ENCODE measurements at regions of chr13 and their contacts with region 1.

Region 1: GRCh38 chr13:33228648-33229445 is 56.7 kb downstream of the STARD13 start:
- DNase-seq: peak; percentile 26
- ATAC-seq: no peak
- H3K4me3 Mint-ChIP-seq: no peak overlapping the region
- H3K27ac Mint-ChIP-seq: no peak overlapping the region
- H3K4me1 Mint-ChIP-seq: peaks cover 2% of the 10 kb centered on the region
- H3K27me3 Mint-ChIP-seq: peaks cover 5% of the 10 kb centered on the region

Region 2: DNA sequence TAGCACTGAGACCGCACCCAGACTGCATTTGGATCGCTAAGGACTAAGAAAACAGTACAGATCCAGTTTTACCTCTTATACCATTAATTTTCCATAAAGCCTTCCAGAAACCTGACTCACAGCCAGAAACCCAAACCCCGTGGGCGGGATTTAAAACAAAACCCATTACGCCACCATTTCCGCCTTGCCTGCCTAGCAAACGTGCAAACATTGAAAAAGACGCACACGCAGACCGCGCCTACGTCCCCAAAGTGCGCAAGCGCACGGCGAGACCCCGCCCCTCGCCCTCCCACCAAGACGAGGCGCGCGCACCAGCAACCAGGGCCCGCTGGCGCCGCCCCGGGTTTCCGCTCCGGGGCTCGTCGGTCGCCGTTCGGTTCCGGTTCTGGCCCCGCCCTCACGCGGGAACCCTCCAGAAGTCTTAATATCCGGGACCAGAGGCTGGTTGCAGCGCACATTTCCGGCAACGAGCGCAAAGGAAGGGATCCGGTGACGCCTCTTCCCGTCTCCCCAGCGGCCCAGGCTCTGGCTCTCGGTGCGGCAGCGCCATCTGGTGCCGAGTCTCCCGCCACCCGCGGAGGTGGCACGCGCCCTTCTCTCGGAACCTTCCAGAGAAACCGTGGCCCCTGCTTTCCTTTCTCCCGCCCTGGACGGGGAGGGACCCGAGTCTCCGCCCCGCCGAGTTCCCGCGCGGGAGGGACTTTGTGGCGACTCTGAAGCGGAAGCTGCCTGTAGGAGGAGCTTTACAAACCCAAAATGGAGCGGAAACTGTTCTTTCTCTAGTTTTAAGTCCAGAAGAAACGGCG is 313.6 kb after region 1 on chr13:
- CTCF ChIA-PET with region 1: interaction called, 11 read pairs
- POLR2A ChIA-PET with region 1: no interaction called
- DNase-seq: peak; percentile 97
- ATAC-seq: peak; percentile 91
- H3K4me3 Mint-ChIP-seq: peak overlapping the region; percentile 88
- H3K27ac Mint-ChIP-seq: peak overlapping the region; percentile 100
- H3K4me1 Mint-ChIP-seq: peaks cover 30% of the 10 kb centered on the region
- H3K27me3 Mint-ChIP-seq: no peaks in the 10 kb centered on the region

Region 3: GRCh38 chr13:33723772-33724435 is 495.1 kb after region 1 on chr13:
- CTCF ChIA-PET with region 1: interaction called, 13 read pairs
- POLR2A ChIA-PET with region 1: no interaction called
- DNase-seq: peak; percentile 73
- ATAC-seq: peak; percentile 86
- H3K4me3 Mint-ChIP-seq: no peak overlapping the region
- H3K27ac Mint-ChIP-seq: no peak overlapping the region
- H3K4me1 Mint-ChIP-seq: peaks cover 12% of the 10 kb centered on the region
- H3K27me3 Mint-ChIP-seq: no peaks in the 10 kb centered on the region

Region 4: DNA sequence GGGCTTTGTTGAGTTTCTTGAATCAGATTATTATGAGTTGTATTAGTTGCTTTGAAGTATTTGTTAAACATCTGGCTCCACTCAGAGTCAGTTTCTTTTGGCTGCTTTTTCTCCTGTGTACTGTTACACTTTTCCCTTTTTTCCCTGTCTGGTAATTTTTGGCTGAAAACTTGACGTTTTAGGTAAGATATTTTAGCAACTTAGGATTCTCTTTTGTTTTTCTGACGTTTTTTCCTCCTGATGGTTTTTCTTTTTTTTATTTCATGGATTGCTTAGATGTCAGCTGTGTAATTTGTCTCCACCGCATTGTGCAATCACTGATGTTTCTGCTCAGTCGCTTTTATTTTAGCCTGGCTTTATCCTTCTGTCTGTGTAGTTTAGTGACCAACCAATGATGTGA is 609.8 kb after region 1 on chr13:
- CTCF ChIA-PET with region 1: no interaction called
- POLR2A ChIA-PET with region 1: no interaction called
- DNase-seq: no peak
- ATAC-seq: no peak
- H3K4me3 Mint-ChIP-seq: no peak overlapping the region
- H3K27ac Mint-ChIP-seq: no peak overlapping the region
- H3K4me1 Mint-ChIP-seq: no peaks in the 10 kb centered on the region
- H3K27me3 Mint-ChIP-seq: no peaks in the 10 kb centered on the region

Measured in activated CD8-positive, alpha-beta T cell treated with anti-CD3 and anti-CD28 coated beads, Interleukin-2, amount 10 ng/mL, durations not matched to agents 7 days and 5 days (primary cell).